ENCODE measurements at regions of chr19 and their contacts with region 1.

Region 1: GRCh38 chr19:29212648-29213573 is at the start of gene UQCRFS1:
- DNase-seq: peak; percentile 88 to 96
- H3K4me3 ChIP-seq: peak within 1 kb of the TSS; percentile 76
- H3K4me1 ChIP-seq: peaks cover 18% of the 10 kb centered on the region
- H3K27me3 ChIP-seq: no peaks in the 10 kb centered on the region

Region 2: GRCh38 chr19:28836421-28836820 is 376.5 kb before region 1 on chr19:
- in situ Hi-C with region 1: no loop called
- DNase-seq: no peak
- H3K4me3 ChIP-seq: no peak overlapping the region
- H3K4me1 ChIP-seq: no peaks in the 10 kb centered on the region
- H3K27me3 ChIP-seq: no peaks in the 10 kb centered on the region

Region 3: GRCh38 chr19:29121684-29122083 is 91.2 kb before region 1 on chr19:
- in situ Hi-C with region 1: no loop called
- DNase-seq: no peak
- H3K4me3 ChIP-seq: no peak overlapping the region
- H3K4me1 ChIP-seq: no peaks in the 10 kb centered on the region
- H3K27me3 ChIP-seq: no peaks in the 10 kb centered on the region

Region 4: DNA sequence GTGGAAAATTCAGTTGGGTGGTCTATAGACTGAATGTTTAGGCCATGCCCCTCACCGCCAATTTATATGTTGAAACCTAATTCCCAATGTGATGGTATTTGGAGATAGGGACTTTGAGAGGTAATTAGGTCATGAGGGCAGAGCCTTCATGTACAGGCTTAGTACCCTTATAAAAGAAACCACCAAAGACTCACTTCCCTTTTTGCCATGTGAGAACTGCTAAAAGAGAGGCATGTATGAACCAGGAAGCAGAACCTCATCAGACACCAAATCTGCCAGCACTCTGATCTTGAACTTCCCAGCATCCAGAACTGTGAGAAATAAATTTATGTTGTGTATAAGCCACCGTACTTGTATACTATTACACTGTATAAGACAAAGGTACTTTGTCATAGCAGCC is 40.6 kb before region 1 on chr19:
- in situ Hi-C with region 1: no loop called
- DNase-seq: no peak
- H3K4me3 ChIP-seq: no peak overlapping the region
- H3K4me1 ChIP-seq: no peaks in the 10 kb centered on the region
- H3K27me3 ChIP-seq: no peaks in the 10 kb centered on the region

Region 5: GRCh38 chr19:29694669-29695627 is 482.0 kb after region 1 on chr19:
- in situ Hi-C with region 1: loop called (anchors 25 kb)
- DNase-seq: peak; percentile 27 to 81
- H3K4me3 ChIP-seq: no peak overlapping the region
- H3K4me1 ChIP-seq: no peaks in the 10 kb centered on the region
- H3K27me3 ChIP-seq: no peaks in the 10 kb centered on the region